ENCODE measurements at regions of chr14 and their contacts with region 1.

Region 1: GRCh38 chr14:73728717-73729330 is 14.6 kb upstream of the PNMA1 start:
- DNase-seq: peak; percentile 75 to 88 (median 87)
- H3K4me3 ChIP-seq: no peak overlapping the region
- H3K27ac ChIP-seq: peak overlapping the region; percentile 24 to 39
- H3K4me1 ChIP-seq: peaks cover 18% of the 10 kb centered on the region
- H3K27me3 ChIP-seq: no peaks in the 10 kb centered on the region
- CTCF ChIP-seq: peak; percentile 93 to 96 (median 95)
- EP300 ChIP-seq: no peak
- POLR2A ChIP-seq: peak; percentile 39

Region 2: GRCh38 chr14:73153272-73153671 is 575.6 kb before region 1 on chr14:
- intact Hi-C with region 1: no loop called
- DNase-seq: no peak
- H3K4me3 ChIP-seq: no peak overlapping the region
- H3K27ac ChIP-seq: no peak overlapping the region
- H3K4me1 ChIP-seq: no peaks in the 10 kb centered on the region
- H3K27me3 ChIP-seq: no peaks in the 10 kb centered on the region
- CTCF ChIP-seq: no peak
- EP300 ChIP-seq: no peak
- POLR2A ChIP-seq: no peak

Region 3: GRCh38 chr14:73816393-73816816 is 87.6 kb after region 1 on chr14:
- intact Hi-C with region 1: loop called in 2 of 4 experiments (anchors 5 kb)
- DNase-seq: peak in 3 of 5 donors; percentile 41 to 55 (median 51)
- H3K4me3 ChIP-seq: no peak overlapping the region
- H3K27ac ChIP-seq: peak overlapping the region in 1 of 2 donors; percentile 78
- H3K4me1 ChIP-seq: no peaks in the 10 kb centered on the region
- H3K27me3 ChIP-seq: no peaks in the 10 kb centered on the region
- CTCF ChIP-seq: no peak
- EP300 ChIP-seq: no peak
- POLR2A ChIP-seq: no peak

Region 4: GRCh38 chr14:73825551-73826188 is 96.8 kb after region 1 on chr14:
- intact Hi-C with region 1: loop called in 2 of 4 experiments (anchors 1 to 5 kb)
- DNase-seq: peak; percentile 92 to 98 (median 95)
- H3K4me3 ChIP-seq: no peak overlapping the region
- H3K27ac ChIP-seq: peak overlapping the region in 1 of 2 donors; percentile 6
- H3K4me1 ChIP-seq: no peaks in the 10 kb centered on the region
- H3K27me3 ChIP-seq: no peaks in the 10 kb centered on the region
- CTCF ChIP-seq: peak; percentile 67 to 85 (median 84)
- EP300 ChIP-seq: no peak
- POLR2A ChIP-seq: no peak